ENCODE measurements at regions of chr2 and their contacts with region 1.

Region 1: DNA sequence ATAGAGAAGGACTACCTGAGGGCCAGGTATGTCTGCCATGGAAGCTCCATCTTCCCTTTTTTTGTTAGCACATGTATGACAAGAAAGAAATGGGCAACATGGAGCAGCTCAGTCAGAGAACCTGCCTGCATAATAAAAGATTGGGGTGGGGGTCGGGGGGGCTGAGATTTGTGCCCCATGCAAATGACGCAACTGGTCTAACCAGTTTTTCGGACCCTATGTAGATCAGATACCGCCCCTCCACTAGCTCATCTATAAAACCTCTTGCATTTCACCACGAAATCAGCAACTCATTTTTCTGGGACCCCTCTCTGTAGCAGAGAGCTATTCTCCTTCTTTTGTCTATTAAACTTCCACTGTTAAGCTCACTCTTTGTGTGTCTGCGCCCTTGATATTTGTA is 657.2 kb downstream of the ERBB4 start:
- DNase-seq: no peak
- ATAC-seq: no peak
- H3K4me3 ChIP-seq: no peak overlapping the region
- H3K27ac ChIP-seq: no peak overlapping the region
- H3K4me1 ChIP-seq: no peaks in the 10 kb centered on the region
- H3K27me3 ChIP-seq: no peaks in the 10 kb centered on the region
- CTCF ChIP-seq: no peak

Region 2: DNA sequence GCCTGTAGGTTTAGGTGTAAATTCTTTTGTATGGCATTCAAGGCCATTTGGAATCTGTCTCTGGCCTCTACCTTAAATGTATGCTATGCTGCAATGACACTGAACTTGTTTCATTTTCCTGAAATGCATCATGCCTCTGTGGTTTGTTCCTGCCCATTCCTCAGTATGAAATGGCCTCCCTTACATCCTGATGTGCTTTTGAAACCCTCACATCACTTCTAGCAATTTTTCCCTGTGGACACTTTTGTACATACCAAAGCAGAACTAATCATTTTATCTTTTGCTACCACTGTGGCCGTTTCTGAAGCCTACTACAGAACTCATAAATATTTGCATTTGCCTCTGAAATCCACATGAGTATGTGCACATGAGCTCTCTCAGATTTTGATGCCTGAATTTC is 100.0 kb after region 1 on chr2:
- intact Hi-C with region 1: no loop called
- DNase-seq: no peak
- ATAC-seq: no peak
- H3K4me3 ChIP-seq: no peak overlapping the region
- H3K27ac ChIP-seq: no peak overlapping the region
- H3K4me1 ChIP-seq: peaks cover 0 to 8% (median 0%) of the 10 kb centered on the region in 9 donors
- H3K27me3 ChIP-seq: no peaks in the 10 kb centered on the region
- CTCF ChIP-seq: no peak

Region 3: GRCh38 chr2:212177724-212178123 is 296.3 kb after region 1 on chr2:
- intact Hi-C with region 1: loop called in 1 of 10 experiments (anchors 5 kb)
- DNase-seq: no peak
- ATAC-seq: no peak
- H3K4me3 ChIP-seq: no peak overlapping the region
- H3K27ac ChIP-seq: no peak overlapping the region
- H3K4me1 ChIP-seq: no peaks in the 10 kb centered on the region
- H3K27me3 ChIP-seq: no peaks in the 10 kb centered on the region
- CTCF ChIP-seq: no peak